Activated CD4-positive, alpha-beta memory T cell treated with anti-CD3 and anti-CD28 coated beads for 36 hours (primary cell): ENCODE measurements at regions of chr20 and their contacts with region 1.

Region 1: GRCh38 chr20:46013826-46014516 is 5.3 kb downstream of the MMP9 start:
- DNase-seq: peak; percentile 76
- H3K4me3 Mint-ChIP-seq: peak overlapping the region; percentile 56
- H3K27ac Mint-ChIP-seq: no peak overlapping the region
- H3K4me1 Mint-ChIP-seq: peaks cover 40% of the 10 kb centered on the region
- H3K27me3 Mint-ChIP-seq: peaks cover 44% of the 10 kb centered on the region

Region 2: GRCh38 chr20:45607810-45608209 is 406.2 kb before region 1 on chr20:
- CTCF ChIA-PET with region 1: no interaction called
- POLR2A ChIA-PET with region 1: no interaction called
- intact Hi-C with region 1: no loop called
- DNase-seq: no peak
- H3K4me3 Mint-ChIP-seq: no peak overlapping the region
- H3K27ac Mint-ChIP-seq: no peak overlapping the region
- H3K4me1 Mint-ChIP-seq: peaks cover 19% of the 10 kb centered on the region
- H3K27me3 Mint-ChIP-seq: peaks cover 25% of the 10 kb centered on the region

Region 3: GRCh38 chr20:45798935-45799642 is 214.9 kb before region 1 on chr20:
- CTCF ChIA-PET with region 1: interaction called, 12 read pairs
- POLR2A ChIA-PET with region 1: no interaction called
- intact Hi-C with region 1: no loop called
- DNase-seq: peak; percentile 74
- H3K4me3 Mint-ChIP-seq: no peak overlapping the region
- H3K27ac Mint-ChIP-seq: peak overlapping the region; percentile 4
- H3K4me1 Mint-ChIP-seq: peaks cover 16% of the 10 kb centered on the region
- H3K27me3 Mint-ChIP-seq: no peaks in the 10 kb centered on the region

Region 4: GRCh38 chr20:45812157-45813020 is 201.6 kb before region 1 on chr20 and contains the start of gene UBE2C:
- CTCF ChIA-PET with region 1: no interaction called
- POLR2A ChIA-PET with region 1: no interaction called
- intact Hi-C with region 1: no loop called
- DNase-seq: peak; percentile 98
- H3K4me3 Mint-ChIP-seq: peak within 1 kb of the TSS; percentile 91
- H3K27ac Mint-ChIP-seq: peak within 1 kb of the TSS; percentile 68
- H3K4me1 Mint-ChIP-seq: peaks cover 13% of the 10 kb centered on the region
- H3K27me3 Mint-ChIP-seq: no peaks in the 10 kb centered on the region
- total RNA-seq, gene UBE2C: 192 to 196 TPM

Region 5: GRCh38 chr20:45890985-45891983 is 122.7 kb before region 1 on chr20 and contains the starts of genes CTSA and NEURL2:
- CTCF ChIA-PET with region 1: no interaction called
- POLR2A ChIA-PET with region 1: no interaction called
- intact Hi-C with region 1: no loop called
- DNase-seq: peak; percentile 92
- H3K4me3 Mint-ChIP-seq: peak within 1 kb of the TSS; percentile 85
- H3K27ac Mint-ChIP-seq: peak within 1 kb of the TSS; percentile 81
- H3K4me1 Mint-ChIP-seq: peaks cover 32% of the 10 kb centered on the region
- H3K27me3 Mint-ChIP-seq: no peaks in the 10 kb centered on the region
- total RNA-seq, gene CTSA: 49.8 to 54.8 TPM
- total RNA-seq, gene NEURL2: 2.3 to 2.5 TPM

Region 6: DNA sequence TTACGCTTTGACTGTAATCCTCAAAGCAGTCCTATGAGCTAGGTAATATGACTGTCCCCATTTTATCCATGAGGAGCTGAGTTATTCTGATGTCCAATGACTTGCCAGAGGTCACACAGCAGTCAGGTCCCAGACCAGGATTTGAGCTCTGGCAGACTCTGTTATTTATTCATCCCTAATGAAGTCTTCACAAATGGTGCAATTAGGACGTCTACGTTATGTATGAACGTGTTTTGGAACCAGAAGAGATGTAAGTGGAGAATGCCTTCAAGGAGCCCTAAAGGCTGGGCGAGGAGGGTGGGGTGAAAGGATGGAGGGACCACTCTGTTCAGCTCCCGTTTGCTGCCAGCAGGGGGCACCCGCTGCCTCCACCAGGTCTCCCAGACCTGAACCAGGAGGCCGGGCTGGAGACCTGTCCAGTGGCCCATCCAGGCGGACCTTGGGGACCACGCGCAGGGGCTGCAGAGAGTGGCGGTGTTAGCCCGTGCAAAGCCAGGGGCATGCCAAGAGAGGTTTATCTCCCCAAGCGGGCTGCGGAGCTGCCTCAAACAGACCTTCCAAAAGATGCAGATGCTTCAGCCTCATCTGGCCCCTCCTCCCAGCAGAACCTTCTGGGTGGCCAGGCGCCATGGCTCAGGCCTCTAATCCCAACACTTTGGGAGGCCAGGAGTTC is 26.7 kb before region 1 on chr20:
- CTCF ChIA-PET with region 1: interaction called, 105 read pairs
- POLR2A ChIA-PET with region 1: no interaction called
- intact Hi-C with region 1: loop called (anchors 1 kb)
- DNase-seq: peak; percentile 85
- H3K4me3 Mint-ChIP-seq: no peak overlapping the region
- H3K27ac Mint-ChIP-seq: no peak overlapping the region
- H3K4me1 Mint-ChIP-seq: peaks cover 3% of the 10 kb centered on the region
- H3K27me3 Mint-ChIP-seq: no peaks in the 10 kb centered on the region

Region 7: GRCh38 chr20:45998761-45999160 is 15.2 kb before region 1 on chr20:
- CTCF ChIA-PET with region 1: interaction called, 15 read pairs
- POLR2A ChIA-PET with region 1: interaction called, 3 read pairs
- intact Hi-C with region 1: no loop called
- DNase-seq: peak; percentile 63
- H3K4me3 Mint-ChIP-seq: no peak overlapping the region
- H3K27ac Mint-ChIP-seq: no peak overlapping the region
- H3K4me1 Mint-ChIP-seq: peaks cover 59% of the 10 kb centered on the region
- H3K27me3 Mint-ChIP-seq: no peaks in the 10 kb centered on the region

Region 8: GRCh38 chr20:46057856-46058598 is 44.1 kb after region 1 on chr20:
- CTCF ChIA-PET with region 1: interaction called, 11 read pairs
- POLR2A ChIA-PET with region 1: no interaction called
- intact Hi-C with region 1: no loop called
- DNase-seq: peak; percentile 28
- H3K4me3 Mint-ChIP-seq: no peak overlapping the region
- H3K27ac Mint-ChIP-seq: no peak overlapping the region
- H3K4me1 Mint-ChIP-seq: peaks cover 44% of the 10 kb centered on the region
- H3K27me3 Mint-ChIP-seq: peaks cover 11% of the 10 kb centered on the region

Region 9: GRCh38 chr20:46089417-46090388 is 75.7 kb after region 1 on chr20 and contains the start of gene NCOA5:
- CTCF ChIA-PET with region 1: interaction called, 20 read pairs
- POLR2A ChIA-PET with region 1: no interaction called
- intact Hi-C with region 1: no loop called
- DNase-seq: peak; percentile 97
- H3K4me3 Mint-ChIP-seq: peak within 1 kb of the TSS; percentile 88
- H3K27ac Mint-ChIP-seq: peak within 1 kb of the TSS; percentile 83
- H3K4me1 Mint-ChIP-seq: peaks cover 49% of the 10 kb centered on the region
- H3K27me3 Mint-ChIP-seq: no peaks in the 10 kb centered on the region
- total RNA-seq, gene NCOA5: 13.1 to 13.7 TPM

Region 10: DNA sequence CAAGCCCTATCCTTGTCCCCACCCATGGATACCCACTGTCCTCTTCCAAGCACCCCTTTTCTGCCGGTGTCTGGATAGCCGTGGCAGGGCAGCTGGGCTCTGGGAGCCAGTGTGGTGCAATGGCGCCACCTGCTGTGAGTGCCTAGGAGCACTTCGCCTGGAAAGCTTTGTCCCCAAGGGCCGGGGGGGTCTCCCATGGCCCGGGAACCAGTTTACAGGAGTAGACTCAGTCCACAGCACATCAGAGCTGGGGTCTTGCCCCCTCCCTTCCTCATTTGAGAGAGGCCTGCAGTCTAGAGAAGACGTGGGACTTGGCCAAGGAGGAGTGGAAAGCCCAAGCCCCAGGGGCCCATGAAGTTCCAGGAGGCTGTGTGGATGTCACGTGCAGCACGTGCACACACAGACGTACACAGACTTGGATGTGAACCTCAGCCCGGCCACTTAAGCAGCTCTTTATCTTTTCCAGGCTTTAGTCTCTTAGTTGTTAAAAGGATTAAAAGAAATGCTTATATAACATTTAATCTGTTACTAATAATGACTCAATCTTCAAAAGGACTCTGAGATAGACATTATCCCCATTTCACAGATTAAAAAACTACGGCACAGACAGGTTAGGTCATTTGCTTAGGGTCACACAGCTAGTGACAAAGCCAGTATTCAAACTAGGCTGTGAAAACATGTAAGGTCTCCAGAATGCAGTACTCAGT is 335.2 kb after region 1 on chr20:
- CTCF ChIA-PET with region 1: interaction called, 13 read pairs
- POLR2A ChIA-PET with region 1: no interaction called
- intact Hi-C with region 1: no loop called
- DNase-seq: peak; percentile 65
- H3K4me3 Mint-ChIP-seq: no peak overlapping the region
- H3K27ac Mint-ChIP-seq: no peak overlapping the region
- H3K4me1 Mint-ChIP-seq: peaks cover 23% of the 10 kb centered on the region
- H3K27me3 Mint-ChIP-seq: no peaks in the 10 kb centered on the region

Region 11: DNA sequence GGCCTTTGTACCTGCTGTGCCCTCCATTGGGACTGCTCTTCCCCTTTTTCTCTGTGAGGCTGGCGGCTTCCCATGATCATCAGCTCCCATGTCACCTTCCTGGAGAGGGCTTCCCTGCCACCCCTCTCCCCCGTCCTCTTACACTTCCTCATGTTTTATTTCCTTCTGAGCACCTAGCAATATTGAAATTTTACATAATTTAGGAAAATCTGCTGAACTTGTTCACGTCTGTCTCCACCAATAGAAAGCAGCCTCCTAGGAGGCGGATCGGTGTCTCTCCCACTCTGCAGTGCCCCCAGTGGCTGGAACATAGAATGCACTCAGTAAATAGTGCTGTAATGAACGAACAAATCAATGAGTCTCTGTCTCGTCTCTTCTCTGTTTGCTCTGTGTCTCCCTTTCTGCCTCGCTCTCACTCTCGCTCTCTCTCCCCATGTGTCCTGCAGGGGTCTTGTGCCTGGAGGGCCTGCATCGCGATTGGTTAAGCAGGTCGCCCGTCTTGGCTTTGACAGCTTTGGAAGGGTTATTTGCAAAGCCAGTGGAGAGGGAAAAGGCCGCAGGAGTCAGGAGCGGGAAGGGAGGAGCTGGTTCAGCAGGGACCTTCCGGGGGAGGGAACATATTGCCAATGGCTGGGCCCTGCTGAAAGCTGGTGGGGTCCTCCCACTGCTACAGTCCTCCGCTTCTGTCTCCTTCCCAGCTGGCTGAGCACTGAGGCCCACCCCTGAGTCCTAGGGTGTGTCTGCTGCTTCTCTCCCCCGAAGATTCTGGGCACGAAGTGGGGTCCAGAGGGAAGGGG is 548.6 kb after region 1 on chr20:
- CTCF ChIA-PET with region 1: no interaction called
- POLR2A ChIA-PET with region 1: no interaction called
- intact Hi-C with region 1: no loop called
- DNase-seq: peak; percentile 75
- H3K4me3 Mint-ChIP-seq: no peak overlapping the region
- H3K27ac Mint-ChIP-seq: no peak overlapping the region
- H3K4me1 Mint-ChIP-seq: peaks cover 21% of the 10 kb centered on the region
- H3K27me3 Mint-ChIP-seq: peaks cover 6% of the 10 kb centered on the region